Activated CD8-positive, alpha-beta T cell treated with anti-CD3 and anti-CD28 coated beads for 36 hours (primary cell): ENCODE measurements at regions of chr18 and their contacts with region 1.

Region 1: GRCh38 chr18:13611601-13612195 is 114.7 kb downstream of the FAM210A start:
- DNase-seq: no peak
- ATAC-seq: no peak
- H3K4me3 Mint-ChIP-seq: peak overlapping the region; percentile 76
- H3K27ac Mint-ChIP-seq: peak overlapping the region; percentile 93
- H3K4me1 Mint-ChIP-seq: peaks cover 86% of the 10 kb centered on the region
- H3K27me3 Mint-ChIP-seq: no peaks in the 10 kb centered on the region
- CTCF ChIP-seq: no peak

Region 2: DNA sequence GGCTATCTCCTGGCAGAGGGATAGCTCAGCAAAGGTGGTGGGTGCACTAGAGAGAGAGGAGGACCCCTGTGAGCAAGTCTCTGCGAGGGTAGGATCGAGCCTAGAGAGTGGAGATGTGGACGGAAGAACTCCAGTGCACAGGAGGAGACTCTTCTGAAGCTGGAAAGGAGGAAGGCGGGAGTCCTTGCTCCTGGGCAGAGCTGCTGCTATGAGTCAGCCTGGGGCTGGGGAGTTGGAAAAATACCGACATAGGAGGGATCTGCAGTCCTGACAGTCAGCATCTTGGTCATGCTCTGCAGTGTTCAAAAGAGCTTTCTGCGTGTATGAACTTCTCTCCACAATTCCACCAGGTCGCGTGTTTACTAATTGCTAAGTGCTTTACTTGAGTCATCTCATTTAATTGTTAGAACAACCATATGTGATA is 159.3 kb before region 1 on chr18:
- CTCF ChIA-PET with region 1: no interaction called
- POLR2A ChIA-PET with region 1: no interaction called
- intact Hi-C with region 1: loop called (anchors 10 kb)
- DNase-seq: no peak
- ATAC-seq: no peak
- H3K4me3 Mint-ChIP-seq: no peak overlapping the region
- H3K27ac Mint-ChIP-seq: no peak overlapping the region
- H3K4me1 Mint-ChIP-seq: peaks cover 42% of the 10 kb centered on the region
- H3K27me3 Mint-ChIP-seq: no peaks in the 10 kb centered on the region
- CTCF ChIP-seq: no peak

Region 3: GRCh38 chr18:13520306-13520705 is 91.4 kb before region 1 on chr18:
- CTCF ChIA-PET with region 1: no interaction called
- POLR2A ChIA-PET with region 1: no interaction called
- intact Hi-C with region 1: no loop called
- DNase-seq: no peak
- ATAC-seq: no peak
- H3K4me3 Mint-ChIP-seq: no peak overlapping the region
- H3K27ac Mint-ChIP-seq: no peak overlapping the region
- H3K4me1 Mint-ChIP-seq: peaks cover 16% of the 10 kb centered on the region
- H3K27me3 Mint-ChIP-seq: no peaks in the 10 kb centered on the region
- CTCF ChIP-seq: no peak

Region 4: GRCh38 chr18:13566941-13567746 is 44.6 kb before region 1 on chr18:
- CTCF ChIA-PET with region 1: interaction called, 14 read pairs
- POLR2A ChIA-PET with region 1: interaction called, 51 read pairs
- intact Hi-C with region 1: loop called (anchors 2 kb)
- DNase-seq: peak; percentile 81
- ATAC-seq: peak; percentile 34
- H3K4me3 Mint-ChIP-seq: peak overlapping the region; percentile 56
- H3K27ac Mint-ChIP-seq: peak overlapping the region; percentile 95
- H3K4me1 Mint-ChIP-seq: peaks cover 85% of the 10 kb centered on the region
- H3K27me3 Mint-ChIP-seq: no peaks in the 10 kb centered on the region
- CTCF ChIP-seq: no peak

Region 5: GRCh38 chr18:13585379-13586153 is 26.1 kb before region 1 on chr18:
- CTCF ChIA-PET with region 1: interaction called, 6 read pairs
- POLR2A ChIA-PET with region 1: interaction called, 10 read pairs
- intact Hi-C with region 1: no loop called
- DNase-seq: no peak
- ATAC-seq: no peak
- H3K4me3 Mint-ChIP-seq: peak overlapping the region; percentile 24
- H3K27ac Mint-ChIP-seq: peak overlapping the region; percentile 38
- H3K4me1 Mint-ChIP-seq: peaks cover 64% of the 10 kb centered on the region
- H3K27me3 Mint-ChIP-seq: no peaks in the 10 kb centered on the region
- CTCF ChIP-seq: no peak

Region 6: DNA sequence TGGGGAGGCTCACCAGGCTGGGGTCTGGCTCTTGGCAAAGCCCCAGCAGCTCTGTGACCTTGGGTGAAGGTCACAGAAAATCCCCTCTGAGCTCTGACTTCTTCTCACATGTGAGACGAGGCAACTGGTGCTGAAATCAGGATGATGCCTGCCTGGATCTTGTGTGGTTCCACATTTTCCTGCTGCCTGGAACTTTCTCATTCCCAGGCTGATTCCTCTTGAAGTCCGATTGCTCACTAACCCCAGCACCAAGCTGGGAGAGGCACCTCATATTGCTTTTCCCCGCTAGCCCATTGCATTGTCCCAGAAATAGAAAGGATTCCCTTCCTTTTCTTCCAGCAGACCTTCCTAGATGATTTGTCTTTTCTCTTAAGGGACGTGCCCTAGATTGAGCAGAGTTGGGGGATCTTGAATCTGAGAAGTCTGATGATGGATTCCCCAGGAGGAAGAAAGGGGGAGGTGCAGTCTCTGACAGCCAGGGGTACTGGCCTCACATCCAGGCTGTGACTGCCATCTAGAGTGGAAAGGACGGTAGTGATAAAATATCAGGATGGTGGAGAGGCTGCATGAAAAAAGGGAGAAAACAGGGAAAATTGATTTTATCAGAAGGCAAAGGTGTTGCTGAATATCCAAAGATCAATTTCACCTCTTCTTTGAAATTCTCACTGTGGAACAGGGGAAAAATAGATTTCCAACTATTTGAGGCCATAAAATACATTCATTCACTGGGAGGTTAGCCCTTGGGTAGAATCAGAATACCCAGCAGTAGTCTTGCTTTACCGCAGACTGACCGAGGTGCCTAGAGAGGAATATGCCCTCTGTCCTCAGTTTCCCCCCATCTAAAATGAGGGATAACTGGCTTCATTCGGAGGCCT is 18.4 kb after region 1 on chr18:
- CTCF ChIA-PET with region 1: interaction called, 12 read pairs
- POLR2A ChIA-PET with region 1: no interaction called
- intact Hi-C with region 1: no loop called
- DNase-seq: peak; percentile 74
- ATAC-seq: peak; percentile 95
- H3K4me3 Mint-ChIP-seq: no peak overlapping the region
- H3K27ac Mint-ChIP-seq: peak overlapping the region; percentile 70
- H3K4me1 Mint-ChIP-seq: peaks cover 28% of the 10 kb centered on the region
- H3K27me3 Mint-ChIP-seq: no peaks in the 10 kb centered on the region
- CTCF ChIP-seq: peak; percentile 90

Region 7: GRCh38 chr18:13915995-13916431 is 304.3 kb after region 1 on chr18:
- CTCF ChIA-PET with region 1: no interaction called
- POLR2A ChIA-PET with region 1: no interaction called
- intact Hi-C with region 1: no loop called
- DNase-seq: no peak
- ATAC-seq: no peak
- H3K4me3 Mint-ChIP-seq: no peak overlapping the region
- H3K27ac Mint-ChIP-seq: no peak overlapping the region
- H3K4me1 Mint-ChIP-seq: no peaks in the 10 kb centered on the region
- H3K27me3 Mint-ChIP-seq: peaks cover 1% of the 10 kb centered on the region
- CTCF ChIP-seq: no peak